ENCODE measurements at regions of chr14 and their contacts with region 1.

Region 1: GRCh38 chr14:74324931-74325361 is 22.2 kb upstream of the ABCD4 start:
- DNase-seq: peak; percentile 42 to 65
- ATAC-seq: peak; percentile 51 to 69; a peak in 4 of 6 replicates
- H3K4me3 ChIP-seq: no peak overlapping the region
- H3K27ac ChIP-seq: no peak overlapping the region
- H3K4me1 ChIP-seq: no peaks in the 10 kb centered on the region
- CTCF ChIP-seq: peak; percentile 59
- EP300 ChIP-seq: no peak
- POLR2A ChIP-seq: no peak
- RAD21 ChIP-seq: peak; percentile 55 to 62; a peak in 4 of 5 replicates

Region 2: GRCh38 chr14:74302634-74303577 is 22.0 kb before region 1 on chr14 and contains the start of gene ABCD4:
- CTCF ChIA-PET with region 1: interaction called, 58 read pairs
- POLR2A ChIA-PET with region 1: no interaction called
- DNase-seq: peak; percentile 85 to 93
- ATAC-seq: peak; percentile 98 to 99
- H3K4me3 ChIP-seq: peak within 1 kb of the TSS; percentile 96
- H3K27ac ChIP-seq: peak within 1 kb of the TSS; percentile 87 to 89
- H3K4me1 ChIP-seq: peaks cover 2% of the 10 kb centered on the region; the same call in 1 of the 3 replicates
- CTCF ChIP-seq: peak; percentile 83
- EP300 ChIP-seq: no peak
- POLR2A ChIP-seq: peak; percentile 93
- RAD21 ChIP-seq: no peak
- polyA plus RNA-seq, gene ABCD4: 13.9 and 22.7 TPM in 2 replicates

Region 3: DNA sequence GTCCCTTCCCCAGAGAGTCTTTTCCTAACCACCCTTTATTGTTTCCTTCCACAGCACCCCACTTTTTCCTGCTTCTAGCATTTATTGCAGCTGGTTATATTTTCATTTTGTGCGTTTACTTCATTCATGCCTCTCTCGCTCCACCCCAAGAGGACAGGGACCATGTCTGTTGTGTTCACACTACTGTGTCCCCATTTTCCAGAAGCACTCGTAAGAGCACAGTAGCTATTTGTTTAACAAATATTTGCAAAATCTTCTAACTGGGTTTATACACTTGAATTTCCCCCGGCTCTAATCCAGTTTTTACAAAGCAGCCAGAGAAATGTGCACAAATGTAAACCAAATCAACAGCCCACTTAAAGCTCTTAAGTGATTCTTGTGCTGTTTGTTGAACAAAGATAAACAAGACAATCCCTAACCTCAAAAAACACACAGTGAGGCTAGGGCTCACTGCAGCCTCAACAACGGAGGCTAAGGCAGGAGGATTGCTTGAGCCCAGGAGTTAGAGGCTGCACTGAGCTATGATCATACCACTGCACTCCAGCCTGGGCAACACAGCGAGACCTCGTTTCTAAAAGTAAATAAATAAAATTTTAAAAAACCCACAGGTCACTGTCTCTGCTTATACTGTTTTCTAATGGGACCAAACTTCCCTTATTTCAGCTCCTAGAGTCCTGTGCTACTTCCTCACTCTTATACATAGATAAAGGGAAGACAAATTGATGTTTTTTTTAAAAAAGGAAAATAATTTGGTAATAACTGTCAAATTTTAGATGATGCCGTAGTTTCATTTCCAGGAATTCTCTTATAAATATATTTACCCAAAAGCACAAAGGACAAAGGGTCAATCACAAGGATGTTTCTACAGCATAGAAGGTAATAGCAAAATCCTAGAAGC is 15.6 kb before region 1 on chr14:
- CTCF ChIA-PET with region 1: interaction called, 58 read pairs
- POLR2A ChIA-PET with region 1: no interaction called
- DNase-seq: no peak
- ATAC-seq: no peak
- H3K4me3 ChIP-seq: no peak overlapping the region
- H3K27ac ChIP-seq: no peak overlapping the region
- H3K4me1 ChIP-seq: no peaks in the 10 kb centered on the region
- CTCF ChIP-seq: no peak
- EP300 ChIP-seq: no peak
- POLR2A ChIP-seq: no peak
- RAD21 ChIP-seq: no peak

Region 4: GRCh38 chr14:74392616-74393570 is 67.9 kb after region 1 on chr14:
- CTCF ChIA-PET with region 1: no interaction called
- POLR2A ChIA-PET with region 1: no interaction called
- DNase-seq: no peak
- ATAC-seq: no peak
- H3K4me3 ChIP-seq: no peak overlapping the region
- H3K27ac ChIP-seq: no peak overlapping the region
- H3K4me1 ChIP-seq: no peaks in the 10 kb centered on the region
- CTCF ChIP-seq: no peak
- EP300 ChIP-seq: no peak
- POLR2A ChIP-seq: no peak
- RAD21 ChIP-seq: no peak

Region 5: GRCh38 chr14:74618078-74618952 is 293.4 kb after region 1 on chr14:
- CTCF ChIA-PET with region 1: no interaction called
- POLR2A ChIA-PET with region 1: no interaction called
- DNase-seq: peak; percentile 48 to 80
- ATAC-seq: peak; percentile 51
- H3K4me3 ChIP-seq: no peak overlapping the region
- H3K27ac ChIP-seq: peak overlapping the region; percentile 89 to 96
- H3K4me1 ChIP-seq: peaks cover 81% of the 10 kb centered on the region
- CTCF ChIP-seq: no peak
- EP300 ChIP-seq: peak; percentile 20 to 67; a peak in 1 of 5 replicates
- POLR2A ChIP-seq: no peak
- RAD21 ChIP-seq: no peak